Activated naive CD4-positive, alpha-beta T cell treated with anti-CD3 and anti-CD28 coated beads, Interleukin-2, amount 10 ng/mL, durations not matched to agents 7 days and 5 days (primary cell): ENCODE measurements at regions of chr22 and their contacts with region 1.

Region 1: GRCh38 chr22:36065775-36066559 is 37.3 kb upstream of the RBFOX2 start:
- DNase-seq: peak; percentile 72
- H3K4me3 Mint-ChIP-seq: peak overlapping the region; percentile 72
- H3K27ac Mint-ChIP-seq: peak overlapping the region; percentile 19
- H3K4me1 Mint-ChIP-seq: peaks cover 9% of the 10 kb centered on the region
- H3K27me3 Mint-ChIP-seq: peaks cover 32% of the 10 kb centered on the region

Region 2: DNA sequence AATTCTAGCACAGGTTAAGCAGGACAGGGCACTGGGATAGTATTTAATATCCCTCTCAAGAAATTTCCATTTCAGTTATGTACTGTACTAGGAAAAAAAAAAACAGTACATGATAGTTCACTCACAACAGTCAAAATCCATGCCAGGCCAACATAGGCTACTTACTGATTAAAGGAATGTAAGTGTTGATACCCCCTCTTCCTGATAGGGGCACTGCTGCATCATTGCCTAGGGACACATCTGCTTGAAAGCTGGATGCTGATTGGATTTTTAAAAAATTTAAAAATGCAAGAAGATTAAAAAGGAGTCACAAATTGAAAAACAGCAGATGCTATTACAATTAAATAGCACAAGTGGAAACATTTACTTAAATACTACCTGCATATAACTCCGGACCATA is 304.9 kb before region 1 on chr22:
- CTCF ChIA-PET with region 1: no interaction called
- DNase-seq: no peak
- H3K4me3 Mint-ChIP-seq: no peak overlapping the region
- H3K27ac Mint-ChIP-seq: no peak overlapping the region
- H3K4me1 Mint-ChIP-seq: no peaks in the 10 kb centered on the region
- H3K27me3 Mint-ChIP-seq: no peaks in the 10 kb centered on the region

Region 3: DNA sequence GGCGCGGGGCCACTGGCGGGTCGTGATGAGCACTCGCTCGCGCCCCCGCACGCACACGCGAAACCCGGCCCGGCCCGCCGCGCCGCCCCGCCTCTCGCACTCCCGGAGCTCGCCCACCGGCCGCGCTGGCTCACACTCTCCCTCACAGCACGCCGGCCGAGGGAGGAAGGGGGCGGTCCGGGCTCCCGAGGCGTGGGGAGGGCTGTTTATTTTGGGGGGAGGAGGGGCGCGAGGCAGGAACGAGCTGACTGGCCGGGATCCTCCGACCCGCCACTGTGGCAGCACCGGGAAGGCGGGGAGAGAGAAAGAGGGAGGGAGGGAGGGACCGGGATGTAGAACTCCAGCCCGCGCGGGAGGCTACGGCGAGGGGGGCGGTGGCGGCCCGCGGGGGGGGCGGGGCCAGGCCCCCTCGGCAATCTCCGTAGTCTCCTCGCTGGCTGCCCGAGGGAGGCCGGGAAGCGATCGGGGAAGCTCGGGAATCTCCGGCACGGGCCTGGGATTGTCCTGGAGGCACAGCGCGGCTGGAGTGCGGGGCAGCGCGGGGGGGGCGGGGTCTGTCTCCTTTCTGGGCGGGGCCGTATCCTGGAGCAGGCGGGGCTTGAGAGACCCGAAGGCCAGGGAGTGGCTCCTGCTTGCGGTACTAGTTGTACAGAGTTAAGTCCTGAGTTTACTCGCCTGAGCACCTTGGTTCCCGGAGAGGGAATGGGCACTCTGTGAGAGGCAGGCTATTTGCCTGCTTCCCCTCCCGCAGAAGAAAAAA is 37.1 kb before region 1 on chr22 and contains the start of gene RBFOX2:
- CTCF ChIA-PET with region 1: interaction called, 13 read pairs
- DNase-seq: peak; percentile 76
- H3K4me3 Mint-ChIP-seq: peak within 1 kb of the TSS; percentile 87
- H3K27ac Mint-ChIP-seq: peak within 1 kb of the TSS; percentile 2
- H3K4me1 Mint-ChIP-seq: peaks cover 14% of the 10 kb centered on the region
- H3K27me3 Mint-ChIP-seq: peaks cover 63% of the 10 kb centered on the region

Region 4: GRCh38 chr22:36052505-36053270 is 13.3 kb before region 1 on chr22:
- CTCF ChIA-PET with region 1: interaction called, 13 read pairs
- DNase-seq: no peak
- H3K4me3 Mint-ChIP-seq: no peak overlapping the region
- H3K27ac Mint-ChIP-seq: no peak overlapping the region
- H3K4me1 Mint-ChIP-seq: peaks cover 5% of the 10 kb centered on the region
- H3K27me3 Mint-ChIP-seq: peaks cover 30% of the 10 kb centered on the region

Region 5: DNA sequence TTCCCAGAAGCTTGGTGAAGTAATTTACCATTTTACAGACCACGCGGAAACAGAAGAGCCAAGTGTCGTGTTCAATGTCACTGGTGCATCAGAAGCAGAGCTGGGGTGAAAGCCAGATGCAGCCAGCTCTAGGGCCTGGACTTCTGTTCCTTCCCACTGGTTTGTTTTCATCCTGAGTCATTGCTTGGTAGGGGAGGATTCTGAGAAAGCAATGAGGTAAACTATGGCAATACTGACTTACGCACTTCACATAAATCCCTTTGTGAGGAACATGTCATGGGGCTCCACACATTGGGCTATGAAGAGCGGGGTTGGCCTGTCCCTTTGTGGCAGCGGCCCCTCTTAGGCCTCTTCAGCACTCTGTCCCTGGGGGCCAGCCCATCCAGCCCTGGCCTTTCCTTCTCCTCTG is 15.1 kb after region 1 on chr22:
- CTCF ChIA-PET with region 1: interaction called, 21 read pairs
- DNase-seq: no peak
- H3K4me3 Mint-ChIP-seq: no peak overlapping the region
- H3K27ac Mint-ChIP-seq: no peak overlapping the region
- H3K4me1 Mint-ChIP-seq: peaks cover 9% of the 10 kb centered on the region
- H3K27me3 Mint-ChIP-seq: peaks cover 9% of the 10 kb centered on the region

Region 6: GRCh38 chr22:36088292-36088691 is 22.3 kb after region 1 on chr22:
- CTCF ChIA-PET with region 1: interaction called, 13 read pairs
- DNase-seq: no peak
- H3K4me3 Mint-ChIP-seq: no peak overlapping the region
- H3K27ac Mint-ChIP-seq: no peak overlapping the region
- H3K4me1 Mint-ChIP-seq: peaks cover 9% of the 10 kb centered on the region
- H3K27me3 Mint-ChIP-seq: no peaks in the 10 kb centered on the region

Region 7: GRCh38 chr22:36123673-36124630 is 58.0 kb after region 1 on chr22:
- CTCF ChIA-PET with region 1: interaction called, 23 read pairs
- DNase-seq: peak; percentile 94
- H3K4me3 Mint-ChIP-seq: peak overlapping the region; percentile 6
- H3K27ac Mint-ChIP-seq: peak overlapping the region; percentile 73
- H3K4me1 Mint-ChIP-seq: peaks cover 14% of the 10 kb centered on the region
- H3K27me3 Mint-ChIP-seq: peaks cover 39% of the 10 kb centered on the region

Region 8: DNA sequence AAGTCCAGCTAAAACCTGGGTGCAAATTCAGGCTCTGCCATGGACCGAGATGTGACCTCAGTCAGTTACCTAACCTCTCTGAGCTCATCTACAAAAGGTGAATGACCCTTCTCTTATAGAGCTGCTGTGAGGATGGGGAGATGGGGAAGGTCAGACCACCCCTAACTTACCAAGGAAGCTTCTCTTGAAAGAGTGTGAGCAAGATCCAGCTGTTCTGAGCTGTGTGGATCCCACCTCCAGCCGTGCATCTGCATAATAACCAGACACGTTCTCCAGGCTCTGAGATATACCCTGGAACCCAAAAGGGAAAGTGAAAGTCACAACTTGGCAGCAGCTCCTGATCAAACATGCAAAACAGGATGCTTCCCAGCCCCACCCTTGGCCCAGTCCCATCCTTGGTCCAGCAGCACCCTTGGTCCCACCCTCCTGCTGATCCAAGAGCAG is 94.6 kb after region 1 on chr22 and contains the start of gene APOL3:
- CTCF ChIA-PET with region 1: no interaction called
- DNase-seq: peak; percentile 77
- H3K4me3 Mint-ChIP-seq: peak within 1 kb of the TSS; percentile 99
- H3K27ac Mint-ChIP-seq: peak within 1 kb of the TSS; percentile 93
- H3K4me1 Mint-ChIP-seq: peaks cover 89% of the 10 kb centered on the region
- H3K27me3 Mint-ChIP-seq: peaks cover under 1% of the 10 kb centered on the region

Region 9: DNA sequence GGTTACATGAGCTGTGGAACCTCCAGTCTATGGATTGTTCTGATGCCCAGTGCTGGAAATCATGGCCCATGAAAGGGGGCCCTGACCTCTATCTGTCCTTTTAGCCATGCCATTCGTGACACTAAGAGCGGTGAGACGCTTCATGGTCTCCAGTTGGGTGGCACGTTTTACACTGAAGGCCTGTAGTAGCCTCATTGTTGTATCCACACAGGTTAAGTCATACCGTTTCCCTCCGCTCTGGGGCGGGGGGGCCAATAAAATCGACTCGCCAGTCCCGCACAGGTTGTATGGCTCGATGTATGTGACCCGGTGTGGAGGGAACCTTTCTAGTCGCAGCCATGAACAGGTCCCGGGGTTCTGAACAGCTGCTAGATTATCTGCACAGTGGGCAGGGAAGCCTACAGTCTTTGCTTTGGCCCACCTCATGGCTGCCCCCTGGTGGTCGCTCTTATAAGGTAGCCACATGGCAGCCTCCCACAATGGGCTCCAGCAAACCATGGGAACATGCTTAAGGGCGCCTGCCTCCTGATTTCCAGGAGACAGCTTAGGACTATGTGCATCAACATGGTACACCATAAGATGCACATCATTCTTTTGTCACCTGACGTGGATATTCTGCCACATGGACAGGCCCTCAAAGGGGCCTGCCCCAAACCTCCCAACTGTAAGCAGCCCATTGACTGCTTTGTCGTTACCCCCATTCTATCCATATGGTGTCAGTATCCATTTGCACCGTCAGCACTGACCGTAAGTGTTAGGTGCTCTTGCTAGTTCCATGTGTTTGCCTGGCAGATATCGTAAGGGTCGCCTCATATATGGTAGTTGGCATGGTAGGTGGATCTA is 114.3 kb after region 1 on chr22:
- CTCF ChIA-PET with region 1: interaction called, 21 read pairs
- DNase-seq: peak; percentile 89
- H3K4me3 Mint-ChIP-seq: no peak overlapping the region
- H3K27ac Mint-ChIP-seq: no peak overlapping the region
- H3K4me1 Mint-ChIP-seq: no peaks in the 10 kb centered on the region
- H3K27me3 Mint-ChIP-seq: peaks cover 31% of the 10 kb centered on the region